HEK293 (cell line): ENCODE measurements at regions of chr2 and their contacts with region 1.

Region 1: GRCh38 chr2:69724540-69725159 is 17.3 kb upstream of the ANXA4 start:
- H3K4me3 ChIP-seq: peak overlapping the region; percentile 15
- H3K27ac ChIP-seq: no peak overlapping the region
- H3K4me1 ChIP-seq: no peaks in the 10 kb centered on the region
- CTCF ChIP-seq: peak; percentile 90

Region 2: DNA sequence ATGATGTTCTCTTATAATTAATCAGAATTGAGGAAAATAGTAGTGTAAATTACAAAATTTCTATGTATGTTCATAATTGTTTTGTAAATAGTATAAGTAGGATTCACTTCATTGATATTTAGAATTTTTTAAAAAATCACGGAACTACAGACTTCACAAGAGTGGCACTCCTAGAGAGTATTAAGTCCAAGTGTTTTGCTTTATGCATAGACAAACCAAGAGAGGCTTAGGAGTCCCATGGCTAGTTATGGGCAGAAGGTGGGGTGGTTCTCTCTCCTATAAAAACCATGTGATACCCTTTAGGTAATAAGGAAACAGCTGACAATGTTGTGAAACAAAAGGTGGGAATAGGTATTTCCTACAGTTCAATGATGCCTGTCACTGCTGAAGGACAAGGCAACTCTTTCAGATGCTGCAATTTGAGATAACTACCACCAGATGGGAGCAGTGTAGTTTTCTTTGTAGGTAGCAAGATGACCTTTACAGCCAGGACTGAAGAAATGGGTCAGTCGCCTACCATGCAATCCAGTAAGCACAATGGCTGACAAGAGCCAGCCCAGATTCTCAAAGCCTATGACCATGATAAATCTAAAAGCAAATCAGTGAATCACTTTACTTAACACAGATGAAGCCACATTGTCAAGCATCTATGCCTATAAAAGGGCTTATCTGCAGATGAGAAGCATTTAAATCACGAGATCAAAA is 165.1 kb before region 1 on chr2:
- CTCF ChIA-PET with region 1: interaction called, 19 read pairs
- POLR2A ChIA-PET with region 1: no interaction called
- H3K4me3 ChIP-seq: no peak overlapping the region
- H3K27ac ChIP-seq: no peak overlapping the region
- H3K4me1 ChIP-seq: peaks cover 7% of the 10 kb centered on the region; the same call in 1 of the 2 replicates
- CTCF ChIP-seq: 0 out of 2 replicates have a peak, but pooled peaks have one; percentile 22

Region 3: DNA sequence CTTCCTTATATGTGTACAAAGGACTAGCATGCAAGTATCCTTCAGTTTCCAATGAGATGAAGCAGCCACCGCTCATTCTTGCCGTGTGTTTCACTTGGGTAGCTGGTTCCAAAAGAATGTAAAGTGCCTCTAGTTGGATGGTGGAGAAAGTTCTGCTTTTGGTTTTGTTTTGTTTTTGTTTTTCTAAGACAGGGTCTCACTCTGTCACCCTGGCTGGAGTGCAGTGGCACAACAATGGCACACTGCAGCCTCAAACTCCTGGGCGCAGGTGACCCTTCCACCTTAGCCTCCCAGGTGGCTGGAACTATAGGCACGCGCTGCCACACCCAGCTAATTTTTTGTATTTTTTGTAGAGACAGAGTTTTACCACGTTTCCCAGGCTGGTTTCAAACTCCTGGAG is 25.6 kb after region 1 on chr2:
- CTCF ChIA-PET with region 1: interaction called, 14 read pairs
- POLR2A ChIA-PET with region 1: no interaction called
- H3K4me3 ChIP-seq: no peak overlapping the region
- H3K27ac ChIP-seq: no peak overlapping the region
- H3K4me1 ChIP-seq: no peaks in the 10 kb centered on the region
- CTCF ChIP-seq: no peak

Region 4: DNA sequence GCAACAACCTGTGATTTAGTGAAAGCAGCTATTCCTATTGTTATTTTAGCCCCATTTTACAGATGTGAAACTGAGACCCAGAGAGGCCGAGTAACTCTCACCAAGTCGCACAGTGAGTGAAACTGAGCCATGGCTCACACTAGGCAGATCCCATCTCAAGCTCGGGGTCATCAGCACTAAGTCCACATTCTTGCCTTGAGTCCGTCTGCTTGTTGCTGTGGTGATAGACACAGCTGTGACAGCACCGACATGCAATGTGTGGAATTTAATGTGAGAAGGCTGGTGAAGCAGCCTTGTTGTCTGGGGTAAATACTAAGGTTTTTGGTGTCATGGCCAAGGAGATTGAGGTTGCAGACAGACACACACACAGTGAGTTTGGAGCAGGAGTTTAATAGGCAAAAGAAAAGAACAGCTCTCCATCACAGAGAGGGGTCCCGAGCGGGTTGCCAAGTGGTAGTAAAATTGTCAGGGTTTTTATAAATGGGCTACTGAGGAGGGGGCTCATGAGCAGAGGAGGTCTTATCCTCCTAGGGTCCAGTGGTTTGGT is 64.6 kb after region 1 on chr2:
- CTCF ChIA-PET with region 1: interaction called, 16 read pairs
- POLR2A ChIA-PET with region 1: no interaction called
- H3K4me3 ChIP-seq: no peak overlapping the region
- H3K27ac ChIP-seq: no peak overlapping the region
- H3K4me1 ChIP-seq: 0 out of 2 replicates have a peak, but pooled peaks cover 4% of the 10 kb centered on the region
- CTCF ChIP-seq: no peak

Region 5: GRCh38 chr2:69804416-69804815 is 79.8 kb after region 1 on chr2:
- CTCF ChIA-PET with region 1: interaction called, 25 read pairs
- POLR2A ChIA-PET with region 1: no interaction called
- H3K4me3 ChIP-seq: no peak overlapping the region
- H3K27ac ChIP-seq: no peak overlapping the region
- H3K4me1 ChIP-seq: peaks cover 2% of the 10 kb centered on the region; the same call in 1 of the 2 replicates
- CTCF ChIP-seq: no peak

Region 6: DNA sequence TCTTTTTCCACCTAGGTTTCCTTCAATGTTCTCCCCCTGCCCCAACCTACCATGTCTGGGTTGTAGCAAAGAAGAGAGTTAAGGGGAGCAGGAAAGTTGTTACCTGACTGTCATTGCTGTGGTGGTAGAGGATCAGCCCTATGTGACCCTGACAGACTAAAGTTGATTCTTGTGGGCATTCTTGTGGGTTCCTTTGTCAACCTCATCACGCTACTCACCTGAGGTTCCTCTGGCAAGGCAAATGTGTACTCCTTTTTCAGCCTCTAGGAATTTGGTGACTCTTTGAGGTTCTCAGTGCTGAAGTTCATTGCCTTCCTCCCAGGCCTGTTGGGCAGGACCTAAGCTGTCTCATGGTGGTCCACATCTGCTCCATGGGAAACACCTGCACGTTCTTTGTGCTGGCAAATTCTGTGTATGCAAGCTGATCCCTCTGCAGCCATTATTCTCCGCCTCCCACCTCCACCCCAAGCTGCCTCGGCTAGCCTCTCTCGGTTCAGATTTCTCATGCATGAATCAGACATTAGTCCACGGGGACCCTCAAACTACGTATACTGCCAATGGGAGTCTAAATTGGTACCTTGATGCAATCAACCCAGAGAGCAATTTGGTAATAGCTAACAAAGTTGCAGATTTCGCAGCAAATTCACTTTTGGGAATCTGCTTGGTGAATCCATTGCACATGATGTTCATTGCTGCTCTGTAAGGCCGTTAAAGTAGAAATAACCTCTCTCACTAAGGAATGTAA is 103.3 kb after region 1 on chr2:
- CTCF ChIA-PET with region 1: interaction called, 16 read pairs
- POLR2A ChIA-PET with region 1: no interaction called
- H3K4me3 ChIP-seq: no peak overlapping the region
- H3K27ac ChIP-seq: no peak overlapping the region; the same call in 1 of the 2 replicates
- H3K4me1 ChIP-seq: no peaks in the 10 kb centered on the region; the same call in 1 of the 2 replicates
- CTCF ChIP-seq: no peak